ENCODE measurements at regions of chr15 and their contacts with region 1.

Region 1: DNA sequence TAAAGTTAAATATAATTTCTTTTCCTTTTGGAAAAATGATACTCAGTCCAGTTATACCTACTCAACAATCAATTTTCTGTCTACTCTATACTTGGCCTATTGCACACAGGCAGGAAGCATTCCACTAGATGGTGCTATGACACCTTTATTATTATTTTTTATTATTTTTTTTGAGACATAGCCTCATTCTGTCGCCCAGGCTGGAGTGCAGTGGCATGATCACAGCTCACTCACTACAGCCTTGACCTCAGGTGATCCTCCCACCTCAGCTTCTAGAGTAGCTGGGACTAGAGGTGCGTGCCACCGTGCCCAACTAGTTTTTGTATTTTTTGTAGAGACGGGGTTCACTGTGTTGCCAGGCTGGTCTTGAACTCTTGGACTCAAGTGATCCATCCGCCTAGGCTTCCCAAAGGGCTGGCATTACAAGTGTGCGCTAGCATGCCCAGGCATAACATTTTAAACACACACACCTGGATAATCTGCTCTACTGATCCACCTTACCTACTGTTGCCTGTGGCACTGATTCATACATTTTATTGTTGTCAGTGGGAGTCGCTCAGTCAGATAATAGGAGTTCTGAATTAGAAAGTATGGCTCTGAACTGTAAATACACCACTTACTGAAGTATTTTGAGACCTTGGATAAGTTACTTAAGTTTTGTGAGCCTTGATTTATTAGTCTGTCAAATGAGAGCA is 56.2 kb downstream of the EIF3J start:
- DNase-seq: no peak
- ATAC-seq: no peak

Region 2: GRCh38 chr15:44529864-44530604 is 63.2 kb before region 1 on chr15:
- intact Hi-C with region 1: no loop called
- DNase-seq: no peak
- ATAC-seq: no peak

Region 3: DNA sequence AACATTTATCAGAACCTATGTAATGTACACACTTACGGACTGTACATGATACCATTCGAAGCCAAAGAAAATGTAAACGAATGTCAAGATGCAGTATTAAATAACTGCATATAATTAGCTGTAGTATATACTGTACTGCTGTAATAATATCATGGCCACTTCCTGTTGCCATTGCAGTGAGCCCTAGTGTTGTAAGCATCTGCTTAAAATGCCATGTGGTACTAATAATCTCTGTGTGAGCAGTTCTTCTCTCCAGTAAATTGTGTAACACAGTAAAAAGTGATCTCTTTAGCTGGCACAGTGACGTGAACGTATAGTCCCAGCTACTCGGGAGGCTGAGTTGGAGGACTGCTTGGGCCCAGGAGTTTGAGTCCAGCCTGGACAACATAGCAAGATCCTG is 61.7 kb after region 1 on chr15:
- intact Hi-C with region 1: loop called (anchors 5 kb)
- DNase-seq: no peak
- ATAC-seq: no peak

Measured in sciatic nerve (tissue), 2 donors.